ENCODE measurements at regions of chr4 and their contacts with region 1.

Region 1: GRCh38 chr4:162497564-162498167 is 333.9 kb upstream of the FSTL5 start:
- DNase-seq: peak; percentile 30
- ATAC-seq: peak; percentile 60
- H3K4me3 ChIP-seq: no peak overlapping the region
- H3K27ac ChIP-seq: no peak overlapping the region
- H3K4me1 ChIP-seq: no peaks in the 10 kb centered on the region
- H3K27me3 ChIP-seq: no peaks in the 10 kb centered on the region
- CTCF ChIP-seq: peak; percentile 83
- EP300 ChIP-seq: no peak
- POLR2A ChIP-seq: no peak
- RAD21 ChIP-seq: peak; percentile 81

Region 2: DNA sequence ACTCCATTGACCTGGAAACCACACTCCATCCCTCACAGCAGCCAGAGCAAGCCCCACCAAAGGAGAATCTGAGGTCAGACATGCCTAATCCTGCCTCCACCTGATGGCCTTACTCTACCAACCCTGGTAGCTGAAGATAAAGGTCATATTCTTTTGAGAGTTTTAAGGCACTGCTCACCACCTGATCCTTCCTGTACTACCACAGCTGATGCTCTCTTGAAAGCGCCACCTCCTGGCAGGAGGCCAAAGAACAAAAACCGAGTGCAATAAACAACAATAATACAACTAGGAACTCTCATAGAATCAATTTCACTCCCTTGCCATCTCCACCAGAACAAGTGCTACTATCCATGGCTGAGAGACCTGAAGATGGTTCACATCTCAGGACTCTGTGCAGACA is 367.4 kb after region 1 on chr4:
- CTCF ChIA-PET with region 1: no interaction called
- POLR2A ChIA-PET with region 1: no interaction called
- in situ Hi-C with region 1: no loop called
- intact Hi-C with region 1: loop called (anchors 1 kb)
- DNase-seq: no peak
- ATAC-seq: peak; percentile 46; the same call in 1 of the 3 replicates
- H3K4me3 ChIP-seq: no peak overlapping the region
- H3K27ac ChIP-seq: no peak overlapping the region
- H3K4me1 ChIP-seq: no peaks in the 10 kb centered on the region
- H3K27me3 ChIP-seq: no peaks in the 10 kb centered on the region
- CTCF ChIP-seq: peak; percentile 34
- EP300 ChIP-seq: no peak
- POLR2A ChIP-seq: no peak
- RAD21 ChIP-seq: no peak

Region 3: DNA sequence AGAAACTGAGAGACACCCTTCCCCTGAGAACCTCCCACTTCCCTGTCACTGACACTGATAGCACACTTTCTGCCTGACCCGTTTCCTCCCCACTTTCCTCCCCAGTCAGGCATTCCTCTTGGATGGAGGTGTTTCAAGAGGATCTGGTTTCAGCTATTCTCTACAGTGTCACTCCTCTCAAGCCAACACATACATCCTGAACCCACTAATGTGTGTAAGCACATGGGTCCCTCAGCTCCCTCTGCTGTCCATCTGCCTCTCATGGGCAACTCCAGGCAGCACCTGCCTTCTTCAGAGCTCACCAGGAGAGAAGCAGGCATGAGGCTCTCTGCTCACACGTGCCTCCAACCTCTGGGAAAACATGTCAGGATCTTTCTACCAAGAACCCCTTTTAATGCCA is 461.4 kb after region 1 on chr4:
- CTCF ChIA-PET with region 1: no interaction called
- POLR2A ChIA-PET with region 1: no interaction called
- in situ Hi-C with region 1: no loop called
- intact Hi-C with region 1: loop called (anchors 2 kb)
- DNase-seq: no peak
- ATAC-seq: peak; percentile 78
- H3K4me3 ChIP-seq: no peak overlapping the region
- H3K27ac ChIP-seq: no peak overlapping the region
- H3K4me1 ChIP-seq: no peaks in the 10 kb centered on the region
- H3K27me3 ChIP-seq: no peaks in the 10 kb centered on the region
- CTCF ChIP-seq: peak; percentile 45
- EP300 ChIP-seq: no peak
- POLR2A ChIP-seq: no peak
- RAD21 ChIP-seq: no peak

Region 4: DNA sequence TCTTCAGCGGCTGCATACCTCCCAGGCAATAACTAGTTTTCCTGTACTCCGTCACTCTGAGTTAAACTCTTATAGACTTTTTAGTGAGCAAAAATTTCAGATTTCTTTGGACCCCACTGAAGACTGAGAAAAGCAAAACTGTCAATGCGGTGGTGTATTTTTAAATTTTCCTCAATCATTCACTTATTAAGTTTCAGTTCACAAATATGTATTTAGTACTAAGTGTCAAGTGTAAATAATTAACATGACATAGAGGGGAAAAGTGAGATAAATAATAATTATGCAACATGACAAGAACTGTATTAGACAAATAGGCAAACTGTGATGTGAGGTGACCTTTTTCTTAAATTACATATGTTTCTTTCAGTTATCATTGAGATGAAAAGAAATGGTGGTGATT is 544.6 kb after region 1 on chr4:
- CTCF ChIA-PET with region 1: interaction called, 9 read pairs
- POLR2A ChIA-PET with region 1: no interaction called
- in situ Hi-C with region 1: loop called (anchors 5 kb)
- intact Hi-C with region 1: loop called (anchors 1 kb)
- DNase-seq: no peak
- ATAC-seq: no peak
- H3K4me3 ChIP-seq: no peak overlapping the region
- H3K27ac ChIP-seq: no peak overlapping the region
- H3K4me1 ChIP-seq: no peaks in the 10 kb centered on the region
- H3K27me3 ChIP-seq: no peaks in the 10 kb centered on the region
- CTCF ChIP-seq: no peak
- EP300 ChIP-seq: no peak
- POLR2A ChIP-seq: no peak
- RAD21 ChIP-seq: no peak

Region 5: DNA sequence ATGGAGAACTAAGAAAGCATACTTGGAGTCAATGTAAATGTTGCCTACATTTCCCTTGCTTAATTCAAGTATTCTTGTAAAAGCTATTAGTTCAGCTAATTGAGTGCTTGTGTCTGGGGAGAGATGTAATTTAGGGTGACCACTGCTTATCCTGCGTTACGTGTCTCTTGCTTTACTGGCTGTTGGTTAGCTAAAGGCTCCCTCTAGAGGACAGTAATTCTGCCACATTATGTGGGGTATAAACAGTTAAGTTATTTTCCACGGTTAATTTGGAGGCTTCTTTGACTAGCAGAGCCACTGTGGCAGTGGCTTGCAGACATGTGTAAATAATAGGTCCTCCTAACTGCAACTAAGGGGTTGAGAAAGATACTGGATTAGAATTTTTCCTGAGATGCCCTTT is 694.3 kb after region 1 on chr4:
- CTCF ChIA-PET with region 1: interaction called, 4 read pairs
- POLR2A ChIA-PET with region 1: no interaction called
- in situ Hi-C with region 1: no loop called
- intact Hi-C with region 1: loop called (anchors 2 kb)
- DNase-seq: peak; percentile 26
- ATAC-seq: peak; percentile 86
- H3K4me3 ChIP-seq: no peak overlapping the region
- H3K27ac ChIP-seq: no peak overlapping the region
- H3K4me1 ChIP-seq: no peaks in the 10 kb centered on the region
- H3K27me3 ChIP-seq: peaks cover 0 to under 1% of the 10 kb centered on the region in 2 experiments; a peak in 2 of 5 replicates
- CTCF ChIP-seq: peak; percentile 51
- EP300 ChIP-seq: no peak
- POLR2A ChIP-seq: no peak
- RAD21 ChIP-seq: peak; percentile 30; the same call in 1 of the 2 replicates

Region 6: GRCh38 chr4:163544407-163545038 is 1046.9 kb after region 1 on chr4:
- CTCF ChIA-PET with region 1: no interaction called
- POLR2A ChIA-PET with region 1: no interaction called
- in situ Hi-C with region 1: loop called (anchors 25 kb)
- intact Hi-C with region 1: loop called (anchors 2 kb)
- DNase-seq: peak; percentile 22
- ATAC-seq: peak; percentile 90
- H3K4me3 ChIP-seq: no peak overlapping the region
- H3K27ac ChIP-seq: no peak overlapping the region
- H3K4me1 ChIP-seq: no peaks in the 10 kb centered on the region
- H3K27me3 ChIP-seq: no peaks in the 10 kb centered on the region
- CTCF ChIP-seq: peak; percentile 86
- EP300 ChIP-seq: no peak
- POLR2A ChIP-seq: no peak
- RAD21 ChIP-seq: peak; percentile 34; the same call in 1 of the 2 replicates

Region 7: GRCh38 chr4:164012396-164013027 is 1514.8 kb after region 1 on chr4:
- CTCF ChIA-PET with region 1: no interaction called
- POLR2A ChIA-PET with region 1: no interaction called
- in situ Hi-C with region 1: no loop called
- intact Hi-C with region 1: loop called (anchors 5 kb)
- DNase-seq: peak; percentile 28
- ATAC-seq: peak; percentile 98
- H3K4me3 ChIP-seq: no peak overlapping the region
- H3K27ac ChIP-seq: no peak overlapping the region
- H3K4me1 ChIP-seq: no peaks in the 10 kb centered on the region
- H3K27me3 ChIP-seq: no peaks in the 10 kb centered on the region
- CTCF ChIP-seq: peak; percentile 75
- EP300 ChIP-seq: no peak
- POLR2A ChIP-seq: no peak
- RAD21 ChIP-seq: peak; percentile 42; the same call in 1 of the 2 replicates